ENCODE measurements at regions of chrX and their contacts with region 1.

Region 1: GRCh38 chrX:154762523-154763289 is at the start of gene DKC1:
- DNase-seq: peak; percentile 97
- ATAC-seq: peak; percentile 90
- H3K4me3 Mint-ChIP-seq: peak within 1 kb of the TSS; percentile 85
- H3K27ac Mint-ChIP-seq: peak within 1 kb of the TSS; percentile 92
- H3K4me1 Mint-ChIP-seq: peaks cover 33% of the 10 kb centered on the region
- H3K27me3 Mint-ChIP-seq: no peaks in the 10 kb centered on the region
- total RNA-seq, gene DKC1: 126 to 130 TPM

Region 2: GRCh38 chrX:154097597-154098541 is 664.8 kb before region 1 on chrX and contains the start of gene MECP2:
- CTCF ChIA-PET with region 1: no interaction called
- POLR2A ChIA-PET with region 1: no interaction called
- intact Hi-C with region 1: loop called in 1 of 2 experiments (anchors 5 kb)
- DNase-seq: peak; percentile 93
- ATAC-seq: peak; percentile 87
- H3K4me3 Mint-ChIP-seq: peak within 1 kb of the TSS; percentile 81
- H3K27ac Mint-ChIP-seq: peak within 1 kb of the TSS; percentile 96
- H3K4me1 Mint-ChIP-seq: peaks cover 56% of the 10 kb centered on the region
- H3K27me3 Mint-ChIP-seq: peaks cover 2% of the 10 kb centered on the region
- total RNA-seq, gene MECP2: 50.7 to 60.0 TPM

Region 3: GRCh38 chrX:154547245-154548027 is 215.3 kb before region 1 on chrX and contains the start of gene IKBKG:
- CTCF ChIA-PET with region 1: no interaction called
- POLR2A ChIA-PET with region 1: no interaction called
- intact Hi-C with region 1: loop called in 1 of 2 experiments (anchors 1 kb)
- DNase-seq: peak; percentile 92
- ATAC-seq: peak; percentile 81
- H3K4me3 Mint-ChIP-seq: peak within 1 kb of the TSS; percentile 99
- H3K27ac Mint-ChIP-seq: peak within 1 kb of the TSS; percentile 97
- H3K4me1 Mint-ChIP-seq: peaks cover 39% of the 10 kb centered on the region
- H3K27me3 Mint-ChIP-seq: no peaks in the 10 kb centered on the region
- total RNA-seq, gene IKBKG: 32.7 to 33.0 TPM

Region 4: DNA sequence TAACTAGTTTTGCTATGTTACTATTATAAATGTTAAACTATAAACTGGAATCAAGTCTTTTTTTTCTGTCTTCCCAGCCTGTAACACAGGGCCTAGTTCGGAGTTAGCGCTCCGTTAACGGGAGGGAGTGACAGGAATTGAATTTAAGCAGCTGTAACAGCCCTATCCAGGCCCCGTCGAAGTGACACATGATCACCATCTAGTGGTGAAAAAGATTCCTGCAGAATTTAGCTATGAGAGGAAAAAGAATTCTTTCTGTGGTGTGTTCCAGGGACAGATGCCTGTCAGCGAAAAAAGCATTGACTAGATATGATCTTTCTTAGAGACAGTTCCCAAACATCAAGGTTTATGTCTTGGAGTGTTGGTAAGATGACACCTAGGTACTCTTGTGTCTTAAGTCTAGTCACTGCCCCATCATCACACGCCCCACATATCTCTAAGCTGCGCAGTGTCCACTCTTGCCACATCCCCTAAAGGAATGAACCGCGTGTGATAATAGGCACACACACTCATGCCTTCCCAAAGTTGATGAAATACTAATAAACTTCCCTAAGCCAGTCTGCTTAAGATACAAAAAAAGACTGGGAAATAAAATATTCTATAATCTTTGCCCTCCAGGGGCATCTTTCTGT is 13.9 kb before region 1 on chrX:
- CTCF ChIA-PET with region 1: interaction called, 33 read pairs
- POLR2A ChIA-PET with region 1: interaction called, 11 read pairs
- intact Hi-C with region 1: no loop called
- DNase-seq: peak; percentile 55
- ATAC-seq: peak; percentile 83
- H3K4me3 Mint-ChIP-seq: no peak overlapping the region
- H3K27ac Mint-ChIP-seq: no peak overlapping the region
- H3K4me1 Mint-ChIP-seq: peaks cover 22% of the 10 kb centered on the region
- H3K27me3 Mint-ChIP-seq: peaks cover 2% of the 10 kb centered on the region

Region 5: DNA sequence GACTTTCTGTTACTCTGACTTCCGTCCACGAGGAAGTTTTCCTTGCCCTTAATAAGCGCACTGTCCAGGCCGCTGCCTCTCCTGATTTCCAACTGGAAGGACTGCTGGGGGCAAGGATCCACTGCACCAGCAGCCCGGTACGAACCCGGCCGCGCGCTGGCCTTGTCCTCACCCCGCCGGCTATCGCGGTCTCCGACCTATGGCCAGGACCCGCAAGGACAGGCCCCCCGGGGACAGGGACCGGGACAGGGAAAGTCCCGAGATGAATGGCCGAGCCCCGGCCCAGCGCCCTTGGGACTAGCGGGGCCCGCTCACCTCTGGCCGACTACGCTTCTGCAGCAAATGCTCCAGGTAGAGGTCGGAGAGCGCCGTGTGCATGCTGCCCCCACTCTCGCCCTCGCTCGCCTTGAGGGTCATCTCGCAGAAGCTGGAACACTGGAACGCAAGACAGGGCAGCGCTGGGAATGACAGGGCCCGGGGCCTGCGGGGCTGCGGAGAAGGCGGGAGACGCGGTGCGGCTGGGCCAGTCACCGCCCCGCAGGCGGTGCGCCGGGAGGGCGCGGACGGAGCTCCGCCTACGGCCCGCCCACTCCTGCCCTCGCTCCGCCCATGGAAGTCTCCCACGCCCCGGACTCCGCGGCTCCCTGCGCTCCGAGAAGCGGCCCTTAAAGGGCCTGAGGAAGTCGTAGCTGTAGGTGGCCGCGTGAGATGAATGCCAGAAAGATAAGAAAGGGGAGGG is 42.4 kb after region 1 on chrX and contains the start of gene MPP1:
- CTCF ChIA-PET with region 1: no interaction called
- POLR2A ChIA-PET with region 1: no interaction called
- intact Hi-C with region 1: loop called (anchors 1 to 2 kb)
- DNase-seq: peak; percentile 82
- ATAC-seq: peak; percentile 81
- H3K4me3 Mint-ChIP-seq: peak within 1 kb of the TSS; percentile 78
- H3K27ac Mint-ChIP-seq: peak within 1 kb of the TSS; percentile 80
- H3K4me1 Mint-ChIP-seq: peaks cover 38% of the 10 kb centered on the region
- H3K27me3 Mint-ChIP-seq: no peaks in the 10 kb centered on the region
- total RNA-seq, gene MPP1: 24.1 to 27.6 TPM

Region 6: GRCh38 chrX:155070975-155071693 is 308.4 kb after region 1 on chrX and contains the starts of genes BRCC3, CMC4 and MTCP1:
- CTCF ChIA-PET with region 1: no interaction called
- POLR2A ChIA-PET with region 1: no interaction called
- intact Hi-C with region 1: loop called in 1 of 2 experiments (anchors 2 kb)
- DNase-seq: peak; percentile 87
- ATAC-seq: peak; percentile 93
- H3K4me3 Mint-ChIP-seq: peak within 1 kb of the TSS; percentile 90
- H3K27ac Mint-ChIP-seq: peak within 1 kb of the TSS; percentile 93
- H3K4me1 Mint-ChIP-seq: peaks cover 53% of the 10 kb centered on the region
- H3K27me3 Mint-ChIP-seq: no peaks in the 10 kb centered on the region
- total RNA-seq, gene BRCC3: 28.1 to 30.3 TPM
- total RNA-seq, gene CMC4: 3.8 to 7.6 TPM
- total RNA-seq, gene MTCP1: 9.3 to 18.1 TPM

Region 7: DNA sequence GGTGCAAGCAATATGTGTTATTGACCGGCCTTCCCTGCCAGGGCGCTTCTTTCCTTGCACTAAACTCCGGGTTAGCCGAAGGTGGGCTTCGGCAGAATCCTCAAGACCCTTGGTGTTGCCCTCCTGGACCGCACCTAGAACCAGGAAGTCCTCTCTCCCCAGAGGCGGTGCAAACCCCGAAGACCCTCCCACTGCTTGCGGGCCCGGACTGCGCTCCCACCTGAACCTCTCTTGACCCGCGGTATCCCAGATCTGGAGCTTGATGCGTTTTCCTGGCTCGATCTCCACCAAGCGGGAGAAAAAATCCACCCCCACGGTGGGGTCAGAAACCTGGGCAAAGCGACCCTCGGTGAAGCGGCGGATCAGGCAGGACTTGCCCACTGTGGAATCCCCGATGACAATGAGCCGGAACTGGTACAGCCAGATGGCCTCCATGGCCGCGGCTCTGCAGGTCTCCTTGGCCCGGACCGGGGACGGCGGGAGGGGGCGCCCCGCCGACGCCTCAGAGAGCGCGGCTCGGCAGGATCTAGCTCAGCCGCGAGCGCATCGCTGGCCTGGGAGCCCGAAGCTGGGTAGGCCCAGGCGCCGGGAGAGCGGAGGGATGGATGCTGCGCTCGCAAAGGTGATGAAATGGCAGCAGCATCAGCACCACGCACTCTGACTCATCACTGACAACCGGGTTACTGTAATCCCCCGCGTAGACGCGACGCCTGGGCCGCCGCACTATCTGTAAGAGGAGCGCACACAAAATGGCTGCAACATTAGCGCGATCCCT is 501.3 kb after region 1 on chrX and contains the start of gene RAB39B:
- CTCF ChIA-PET with region 1: no interaction called
- POLR2A ChIA-PET with region 1: no interaction called
- intact Hi-C with region 1: no loop called
- DNase-seq: peak; percentile 88
- ATAC-seq: peak; percentile 90
- H3K4me3 Mint-ChIP-seq: peak within 1 kb of the TSS; percentile 89
- H3K27ac Mint-ChIP-seq: peak within 1 kb of the TSS; percentile 94
- H3K4me1 Mint-ChIP-seq: peaks cover 21% of the 10 kb centered on the region
- H3K27me3 Mint-ChIP-seq: no peaks in the 10 kb centered on the region
- total RNA-seq, gene RAB39B: 16.4 to 17.2 TPM